Caco-2 (cell line): ENCODE measurements at regions of chr12 and their contacts with region 1.

Region 1: GRCh38 chr12:14167005-14167628 is 185.7 kb upstream of the GRIN2B start:
- DNase-seq: peak; percentile 64 to 80
- H3K4me3 ChIP-seq: no peak overlapping the region
- H3K4me3 Mint-ChIP-seq: no peak overlapping the region
- H3K27ac Mint-ChIP-seq: no peak overlapping the region
- H3K4me1 ChIP-seq: no peaks in the 10 kb centered on the region
- H3K4me1 Mint-ChIP-seq: no peaks in the 10 kb centered on the region
- H3K27me3 ChIP-seq: no peaks in the 10 kb centered on the region
- H3K27me3 Mint-ChIP-seq: peaks cover 3% of the 10 kb centered on the region
- CTCF ChIP-seq: peak; percentile 97 to 98

Region 2: GRCh38 chr12:13362260-13362841 is 804.8 kb before region 1 on chr12:
- CTCF ChIA-PET with region 1: interaction called, 9 read pairs
- POLR2A ChIA-PET with region 1: no interaction called
- intact Hi-C with region 1: loop called (anchors 1 kb)
- DNase-seq: peak; percentile 85 to 88
- H3K4me3 ChIP-seq: no peak overlapping the region
- H3K4me3 Mint-ChIP-seq: no peak overlapping the region
- H3K27ac Mint-ChIP-seq: no peak overlapping the region
- H3K4me1 ChIP-seq: no peaks in the 10 kb centered on the region
- H3K4me1 Mint-ChIP-seq: no peaks in the 10 kb centered on the region
- H3K27me3 ChIP-seq: no peaks in the 10 kb centered on the region
- H3K27me3 Mint-ChIP-seq: peaks cover 20% of the 10 kb centered on the region
- CTCF ChIP-seq: peak; percentile 93 to 96

Region 3: GRCh38 chr12:13504074-13504473 is 663.0 kb before region 1 on chr12:
- CTCF ChIA-PET with region 1: no interaction called
- POLR2A ChIA-PET with region 1: no interaction called
- intact Hi-C with region 1: no loop called
- DNase-seq: no peak
- H3K4me3 ChIP-seq: no peak overlapping the region
- H3K4me3 Mint-ChIP-seq: no peak overlapping the region
- H3K27ac Mint-ChIP-seq: no peak overlapping the region
- H3K4me1 ChIP-seq: peaks cover 14% of the 10 kb centered on the region; the same call in 1 of the 2 replicates
- H3K4me1 Mint-ChIP-seq: no peaks in the 10 kb centered on the region
- H3K27me3 ChIP-seq: no peaks in the 10 kb centered on the region
- H3K27me3 Mint-ChIP-seq: no peaks in the 10 kb centered on the region
- CTCF ChIP-seq: no peak

Region 4: GRCh38 chr12:13727707-13728195 is 439.4 kb before region 1 on chr12:
- CTCF ChIA-PET with region 1: no interaction called
- POLR2A ChIA-PET with region 1: no interaction called
- intact Hi-C with region 1: no loop called
- DNase-seq: no peak
- H3K4me3 ChIP-seq: no peak overlapping the region
- H3K4me3 Mint-ChIP-seq: no peak overlapping the region
- H3K27ac Mint-ChIP-seq: no peak overlapping the region
- H3K4me1 ChIP-seq: no peaks in the 10 kb centered on the region
- H3K4me1 Mint-ChIP-seq: no peaks in the 10 kb centered on the region
- H3K27me3 ChIP-seq: no peaks in the 10 kb centered on the region
- H3K27me3 Mint-ChIP-seq: no peaks in the 10 kb centered on the region
- CTCF ChIP-seq: no peak

Region 5: GRCh38 chr12:13864081-13864673 is 302.9 kb before region 1 on chr12:
- CTCF ChIA-PET with region 1: interaction called, 8 read pairs
- POLR2A ChIA-PET with region 1: no interaction called
- intact Hi-C with region 1: loop called (anchors 1 kb)
- DNase-seq: peak; percentile 84 to 87
- H3K4me3 ChIP-seq: no peak overlapping the region
- H3K4me3 Mint-ChIP-seq: no peak overlapping the region
- H3K27ac Mint-ChIP-seq: no peak overlapping the region
- H3K4me1 ChIP-seq: peaks cover 23% of the 10 kb centered on the region
- H3K4me1 Mint-ChIP-seq: peaks cover 35% of the 10 kb centered on the region
- H3K27me3 ChIP-seq: no peaks in the 10 kb centered on the region
- H3K27me3 Mint-ChIP-seq: no peaks in the 10 kb centered on the region
- CTCF ChIP-seq: peak; percentile 98 to 99

Region 6: DNA sequence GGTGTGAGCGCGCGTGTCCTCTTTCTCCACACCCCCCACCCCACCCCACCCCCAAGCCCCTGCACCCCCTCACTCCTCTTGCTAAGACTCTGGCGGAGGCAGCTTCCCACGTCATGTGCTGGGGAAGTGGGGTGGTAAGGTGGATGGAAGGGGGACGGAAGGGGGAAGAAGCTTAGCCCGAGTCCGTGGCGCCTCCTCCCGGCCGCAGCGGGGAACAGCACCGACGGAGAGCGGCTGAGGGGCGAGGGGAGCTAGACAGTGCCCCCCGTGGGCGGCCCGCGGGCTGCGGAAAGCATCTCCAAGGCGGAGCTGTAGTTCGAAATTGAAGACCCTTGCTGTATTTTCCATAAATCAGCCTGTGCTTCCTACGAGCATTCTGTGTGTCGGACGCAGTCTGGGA is 185.1 kb before region 1 on chr12:
- CTCF ChIA-PET with region 1: interaction called, 13 read pairs
- POLR2A ChIA-PET with region 1: no interaction called
- intact Hi-C with region 1: loop called (anchors 2 kb)
- DNase-seq: peak; percentile 79 to 92
- H3K4me3 ChIP-seq: peak overlapping the region; percentile 91
- H3K4me3 Mint-ChIP-seq: peak overlapping the region; percentile 98
- H3K27ac Mint-ChIP-seq: no peak overlapping the region
- H3K4me1 ChIP-seq: no peaks in the 10 kb centered on the region
- H3K4me1 Mint-ChIP-seq: peaks cover 11% of the 10 kb centered on the region
- H3K27me3 ChIP-seq: no peaks in the 10 kb centered on the region
- H3K27me3 Mint-ChIP-seq: no peaks in the 10 kb centered on the region
- CTCF ChIP-seq: peak; percentile 98

Region 7: DNA sequence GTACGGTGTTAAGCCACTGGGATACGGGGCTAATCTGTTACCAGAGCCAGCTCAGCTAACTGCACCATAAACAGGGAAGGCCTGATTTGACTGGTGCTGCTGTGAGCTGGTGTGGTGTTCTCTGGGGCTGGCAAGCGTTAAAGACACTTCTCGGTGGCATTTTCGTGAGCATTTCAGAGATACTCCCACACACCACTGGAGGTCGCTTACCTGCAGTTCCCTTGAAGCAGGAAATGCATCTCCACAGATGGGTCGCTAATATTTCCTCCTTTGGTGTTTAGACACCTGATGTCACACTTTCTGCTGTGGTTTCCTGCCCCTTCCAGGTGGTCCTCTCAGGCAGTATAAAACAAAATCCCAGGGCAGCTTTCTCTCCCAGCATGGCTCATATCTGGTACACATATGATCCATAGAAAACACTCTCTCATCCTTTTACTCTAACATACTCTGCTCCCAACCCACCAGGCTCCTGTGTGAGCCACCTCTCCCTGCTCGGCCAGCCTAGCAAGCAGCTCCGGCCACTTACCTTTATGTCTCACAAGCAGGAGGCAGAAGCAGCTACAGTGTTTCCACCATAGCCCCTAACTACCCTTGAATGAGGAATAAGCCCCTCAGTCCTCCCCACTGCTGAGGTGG is 55.8 kb before region 1 on chr12:
- CTCF ChIA-PET with region 1: interaction called, 4 read pairs
- POLR2A ChIA-PET with region 1: no interaction called
- intact Hi-C with region 1: loop called (anchors 1 kb)
- DNase-seq: peak; percentile 51 to 57
- H3K4me3 ChIP-seq: no peak overlapping the region
- H3K4me3 Mint-ChIP-seq: no peak overlapping the region
- H3K27ac Mint-ChIP-seq: no peak overlapping the region
- H3K4me1 ChIP-seq: no peaks in the 10 kb centered on the region
- H3K4me1 Mint-ChIP-seq: peaks cover 6% of the 10 kb centered on the region
- H3K27me3 ChIP-seq: no peaks in the 10 kb centered on the region
- H3K27me3 Mint-ChIP-seq: peaks cover under 1% of the 10 kb centered on the region
- CTCF ChIP-seq: peak; percentile 44 to 79

Region 8: DNA sequence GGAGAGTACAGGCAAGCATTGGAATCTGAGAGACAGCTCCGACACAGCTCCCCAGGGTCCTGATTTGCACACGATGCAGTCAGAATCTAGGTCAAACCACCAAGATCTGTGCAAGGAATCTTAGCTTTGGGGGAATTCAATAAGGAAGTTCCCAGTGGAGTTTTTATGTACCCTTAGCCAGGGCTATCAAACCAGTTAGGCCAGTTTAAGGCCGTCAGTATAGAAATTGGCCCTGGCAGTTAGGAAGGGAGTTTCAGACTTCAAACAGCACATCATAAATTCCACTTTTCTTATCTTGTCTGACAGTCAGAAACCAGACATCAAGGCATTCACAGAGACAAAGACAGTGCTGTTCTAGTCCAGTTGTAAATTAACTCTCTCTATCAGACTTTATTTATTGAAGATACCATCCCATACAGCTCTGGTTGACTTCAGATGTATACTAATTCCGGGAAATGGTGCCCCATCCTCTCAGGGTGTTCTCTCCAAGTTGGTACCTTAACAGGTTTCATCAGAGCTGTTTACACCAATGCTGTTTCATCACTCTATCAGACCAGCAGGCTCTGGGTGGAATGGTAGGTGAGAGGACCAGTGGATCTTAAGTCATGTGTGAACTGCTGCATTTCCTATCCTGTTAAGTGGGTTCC is 40.9 kb after region 1 on chr12:
- CTCF ChIA-PET with region 1: no interaction called
- POLR2A ChIA-PET with region 1: no interaction called
- intact Hi-C with region 1: no loop called
- DNase-seq: peak; percentile 92 to 94
- H3K4me3 ChIP-seq: no peak overlapping the region
- H3K4me3 Mint-ChIP-seq: peak overlapping the region; percentile 29
- H3K27ac Mint-ChIP-seq: peak overlapping the region; percentile 96
- H3K4me1 ChIP-seq: peaks cover 57% of the 10 kb centered on the region
- H3K4me1 Mint-ChIP-seq: peaks cover 55% of the 10 kb centered on the region
- H3K27me3 ChIP-seq: no peaks in the 10 kb centered on the region
- H3K27me3 Mint-ChIP-seq: no peaks in the 10 kb centered on the region
- CTCF ChIP-seq: no peak